ENCODE measurements at regions of chr19 and their contacts with region 1.

Region 1: DNA sequence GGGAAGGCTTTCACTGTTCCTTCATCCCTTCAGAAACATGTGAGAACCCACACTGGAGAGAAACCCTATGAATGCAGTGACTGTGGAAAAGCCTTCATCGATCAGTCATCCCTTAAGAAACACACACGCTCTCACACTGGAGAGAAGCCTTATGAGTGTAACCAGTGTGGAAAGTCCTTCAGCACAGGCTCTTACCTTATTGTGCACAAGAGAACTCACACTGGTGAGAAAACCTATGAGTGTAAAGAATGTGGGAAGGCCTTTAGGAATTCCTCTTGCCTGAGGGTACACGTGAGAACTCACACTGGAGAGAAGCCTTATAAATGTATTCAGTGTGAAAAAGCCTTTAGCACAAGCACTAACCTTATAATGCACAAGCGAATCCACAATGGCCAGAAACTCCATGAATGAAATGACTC is 18.6 kb downstream of the ZNF177 start:
- DNase-seq: no peak
- H3K4me3 ChIP-seq: no peak overlapping the region
- H3K27ac ChIP-seq: no peak overlapping the region
- H3K4me1 ChIP-seq: no peaks in the 10 kb centered on the region
- H3K27me3 ChIP-seq: no peaks in the 10 kb centered on the region
- CTCF ChIP-seq: no peak

Region 2: DNA sequence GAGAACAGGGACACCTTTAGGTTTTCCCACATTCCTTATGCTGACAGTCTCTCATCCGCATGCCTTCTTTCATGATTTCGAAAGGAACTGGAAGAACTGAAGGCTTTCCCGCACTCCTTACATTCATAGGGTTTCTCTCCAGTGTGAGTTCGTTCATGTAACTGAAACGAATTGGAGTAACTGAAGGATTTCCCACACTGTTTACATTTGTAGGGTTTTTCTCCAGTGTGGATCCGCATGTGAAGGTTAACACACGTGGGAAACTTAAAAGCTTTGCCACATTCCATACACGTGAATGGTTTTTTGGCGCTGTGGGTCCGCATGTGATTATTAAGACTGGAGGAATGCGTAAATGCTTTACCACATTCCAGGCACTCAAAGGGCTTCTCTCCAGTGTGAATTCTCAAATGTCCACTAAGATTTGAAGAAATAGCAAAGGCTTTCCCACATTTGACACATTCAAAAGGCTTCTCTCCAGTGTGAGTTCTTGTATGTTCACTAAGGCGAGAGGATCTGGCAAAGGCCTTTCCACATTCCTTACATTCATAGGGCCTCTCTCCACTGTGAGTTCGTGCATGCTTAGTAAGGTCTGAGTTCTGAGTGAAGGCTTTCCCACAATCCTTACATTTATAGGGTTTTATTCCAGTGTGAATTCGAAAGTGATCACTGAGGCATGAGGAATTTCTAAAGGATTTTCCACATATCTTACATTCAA is 32.0 kb after region 1 on chr19:
- dilution Hi-C with region 1: loop called (anchors 5 kb)
- DNase-seq: no peak
- H3K4me3 ChIP-seq: no peak overlapping the region
- H3K27ac ChIP-seq: no peak overlapping the region
- H3K4me1 ChIP-seq: no peaks in the 10 kb centered on the region
- H3K27me3 ChIP-seq: no peaks in the 10 kb centered on the region
- CTCF ChIP-seq: no peak

Measured in keratinocyte (primary cell).